ENCODE measurements at regions of chr2 and their contacts with region 1.

Region 1: DNA sequence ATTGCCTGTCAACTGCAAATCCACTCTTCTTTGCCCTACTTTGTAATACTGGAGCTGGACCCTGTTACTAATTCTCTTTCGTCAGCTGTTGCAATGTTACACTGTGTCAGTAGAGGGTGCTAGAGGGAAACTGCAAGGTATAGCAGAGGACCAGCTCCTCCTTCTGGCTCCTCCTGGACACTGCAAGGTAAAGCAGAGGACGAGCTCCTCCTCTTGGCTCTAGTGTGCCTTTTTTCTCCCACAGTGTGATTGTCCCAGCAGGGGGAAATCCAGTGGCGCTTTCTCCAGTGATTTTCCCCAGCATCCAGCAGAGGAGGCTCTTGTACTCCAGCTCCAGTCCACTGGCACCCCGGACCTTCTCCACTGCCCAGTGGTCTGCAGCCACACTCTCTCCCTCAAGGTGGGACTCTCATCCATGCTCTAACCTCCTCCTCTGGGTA is 95.6 kb downstream of the CAPN13 start:
- DNase-seq: peak; percentile 93
- ATAC-seq: peak; percentile 91
- H3K4me3 Mint-ChIP-seq: no peak overlapping the region
- H3K27ac Mint-ChIP-seq: no peak overlapping the region
- H3K4me1 Mint-ChIP-seq: peaks cover 12% of the 10 kb centered on the region
- H3K27me3 Mint-ChIP-seq: no peaks in the 10 kb centered on the region
- CTCF ChIP-seq: peak; percentile 100

Region 2: DNA sequence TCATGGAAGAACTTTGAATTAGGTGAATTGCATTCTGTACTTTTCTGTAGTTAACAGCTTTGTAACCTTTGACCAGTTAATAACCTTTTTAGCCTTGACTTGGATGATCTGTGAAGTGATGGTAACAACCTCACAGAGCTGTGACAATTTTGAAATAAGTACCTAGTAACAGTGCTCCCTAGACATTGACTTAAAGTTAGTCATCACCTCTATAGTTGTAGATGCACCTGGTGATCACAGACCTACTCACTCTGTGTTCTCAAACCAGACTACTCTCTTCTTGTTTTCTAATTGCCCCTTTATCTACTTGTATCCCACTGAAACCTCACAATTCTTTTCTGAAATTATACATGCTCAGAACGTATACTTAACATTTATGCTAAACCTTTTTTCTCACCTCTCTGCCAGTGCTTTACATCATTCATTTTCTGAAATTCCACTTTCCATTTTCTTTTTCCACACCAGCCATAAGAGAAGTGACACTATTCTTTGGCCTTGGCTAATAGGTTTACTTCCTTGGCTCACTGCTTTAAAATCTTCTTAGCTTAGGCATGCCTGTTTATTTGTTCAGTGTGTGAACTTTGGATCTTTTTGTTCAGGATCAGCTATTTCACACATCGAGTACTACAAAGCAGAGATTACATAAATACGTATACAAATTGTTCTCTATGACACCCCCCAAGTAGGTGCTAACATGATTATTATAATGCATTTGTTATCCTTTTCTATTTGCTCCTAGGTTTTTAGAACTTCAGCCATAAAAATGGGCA is 555.6 kb before region 1 on chr2:
- CTCF ChIA-PET with region 1: interaction called, 40 read pairs
- POLR2A ChIA-PET with region 1: interaction called, 4 read pairs
- intact Hi-C with region 1: no loop called
- DNase-seq: no peak
- ATAC-seq: peak; percentile 72
- H3K4me3 Mint-ChIP-seq: no peak overlapping the region
- H3K27ac Mint-ChIP-seq: peak overlapping the region; percentile 66
- H3K4me1 Mint-ChIP-seq: peaks cover 71% of the 10 kb centered on the region
- H3K27me3 Mint-ChIP-seq: no peaks in the 10 kb centered on the region
- CTCF ChIP-seq: no peak

Region 3: DNA sequence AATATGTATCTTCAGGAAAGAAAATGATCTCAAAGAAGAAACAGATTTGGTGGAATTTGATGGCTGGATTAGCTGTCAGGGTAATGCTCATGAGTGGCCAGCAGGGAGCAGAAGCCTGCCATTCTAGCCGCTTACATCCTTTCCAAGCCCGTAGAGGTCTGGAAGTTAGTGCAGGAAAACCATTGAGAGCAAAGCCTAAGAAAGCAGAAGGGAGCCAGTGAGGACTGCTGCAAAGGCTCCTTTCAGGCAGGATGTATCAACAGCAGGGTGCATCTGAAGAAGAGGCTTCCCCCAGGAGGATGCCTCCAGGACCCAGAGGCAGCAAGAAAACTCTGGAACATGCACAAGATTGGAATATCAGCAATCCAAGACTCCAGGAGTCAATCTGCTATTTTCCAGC is 503.2 kb before region 1 on chr2:
- CTCF ChIA-PET with region 1: interaction called, 185 read pairs
- POLR2A ChIA-PET with region 1: interaction called, 3 read pairs
- intact Hi-C with region 1: loop called (anchors 1 kb)
- DNase-seq: peak; percentile 57
- ATAC-seq: peak; percentile 77
- H3K4me3 Mint-ChIP-seq: no peak overlapping the region
- H3K27ac Mint-ChIP-seq: peak overlapping the region; percentile 33
- H3K4me1 Mint-ChIP-seq: peaks cover 17% of the 10 kb centered on the region
- H3K27me3 Mint-ChIP-seq: no peaks in the 10 kb centered on the region
- CTCF ChIP-seq: peak; percentile 98

Region 4: GRCh38 chr2:30655660-30656059 is 56.0 kb before region 1 on chr2:
- CTCF ChIA-PET with region 1: interaction called, 10 read pairs
- POLR2A ChIA-PET with region 1: no interaction called
- intact Hi-C with region 1: no loop called
- DNase-seq: no peak
- ATAC-seq: no peak
- H3K4me3 Mint-ChIP-seq: no peak overlapping the region
- H3K27ac Mint-ChIP-seq: no peak overlapping the region
- H3K4me1 Mint-ChIP-seq: no peaks in the 10 kb centered on the region
- H3K27me3 Mint-ChIP-seq: no peaks in the 10 kb centered on the region
- CTCF ChIP-seq: no peak

Region 5: GRCh38 chr2:30798536-30798991 is 86.9 kb after region 1 on chr2:
- CTCF ChIA-PET with region 1: interaction called, 10 read pairs
- POLR2A ChIA-PET with region 1: no interaction called
- intact Hi-C with region 1: no loop called
- DNase-seq: peak; percentile 14
- ATAC-seq: peak; percentile 37
- H3K4me3 Mint-ChIP-seq: no peak overlapping the region
- H3K27ac Mint-ChIP-seq: peak overlapping the region; percentile 36
- H3K4me1 Mint-ChIP-seq: peaks cover 10% of the 10 kb centered on the region
- H3K27me3 Mint-ChIP-seq: no peaks in the 10 kb centered on the region
- CTCF ChIP-seq: no peak

Region 6: DNA sequence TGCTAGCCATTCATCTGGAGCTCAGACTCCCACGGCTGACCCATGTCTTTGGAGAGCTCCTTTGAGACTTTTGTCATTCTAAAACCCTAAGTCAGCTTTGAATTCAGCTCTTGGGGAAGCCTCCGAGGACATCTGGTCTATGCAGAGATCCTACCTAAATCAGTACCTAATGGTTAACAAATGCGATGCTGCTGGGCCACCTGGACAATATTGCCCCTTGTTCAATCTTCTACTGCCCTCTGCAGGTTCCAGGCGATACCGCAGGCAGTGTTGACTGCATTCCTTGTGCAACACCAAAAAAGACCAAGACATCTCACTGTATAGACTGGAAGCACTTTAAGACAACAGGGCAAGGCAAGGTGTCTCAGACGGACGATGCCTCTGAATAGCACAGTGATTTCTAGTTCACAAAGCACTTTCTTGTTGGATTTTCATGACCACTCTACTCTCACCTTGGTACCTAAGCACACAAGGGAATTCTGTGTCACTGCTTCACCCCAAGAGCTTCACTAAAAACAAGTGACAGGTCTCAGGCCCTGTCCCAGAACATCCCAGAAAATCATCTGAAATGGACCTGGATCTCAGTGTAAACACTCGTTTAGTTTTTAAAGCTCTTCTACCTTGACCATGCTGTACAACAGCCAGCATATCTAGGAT is 622.0 kb after region 1 on chr2:
- CTCF ChIA-PET with region 1: interaction called, 54 read pairs
- POLR2A ChIA-PET with region 1: no interaction called
- intact Hi-C with region 1: loop called (anchors 5 kb)
- DNase-seq: peak; percentile 87
- ATAC-seq: peak; percentile 95
- H3K4me3 Mint-ChIP-seq: no peak overlapping the region
- H3K27ac Mint-ChIP-seq: no peak overlapping the region
- H3K4me1 Mint-ChIP-seq: no peaks in the 10 kb centered on the region
- H3K27me3 Mint-ChIP-seq: no peaks in the 10 kb centered on the region
- CTCF ChIP-seq: peak; percentile 88